ENCODE measurements at regions of chr21 and their contacts with region 1.

Region 1: DNA sequence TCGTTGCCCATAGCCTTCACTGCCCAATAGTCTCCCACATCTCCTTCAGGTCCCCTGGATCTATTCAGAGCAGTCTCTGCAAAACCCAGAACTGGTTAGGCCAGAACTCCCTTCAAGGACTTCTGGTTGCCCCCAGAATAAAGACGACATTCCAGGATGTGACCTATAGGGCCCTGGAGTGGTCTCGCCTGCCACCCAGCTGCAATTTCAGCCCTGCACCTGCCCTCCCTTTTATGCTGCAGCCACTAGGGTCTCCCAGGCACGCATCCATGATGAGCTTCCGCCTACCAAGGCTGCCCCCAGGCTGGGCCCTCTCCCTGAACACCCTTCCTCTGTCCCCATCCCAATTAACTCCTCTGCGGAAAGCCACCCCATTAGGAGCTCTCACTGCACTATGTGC is 7.2 kb upstream of the TSPEAR start:
- DNase-seq: no peak
- ATAC-seq: no peak
- H3K4me3 Mint-ChIP-seq: no peak overlapping the region
- H3K27ac Mint-ChIP-seq: no peak overlapping the region
- H3K4me1 Mint-ChIP-seq: peaks cover 10% of the 10 kb centered on the region
- H3K27me3 Mint-ChIP-seq: peaks cover 36% of the 10 kb centered on the region

Region 2: DNA sequence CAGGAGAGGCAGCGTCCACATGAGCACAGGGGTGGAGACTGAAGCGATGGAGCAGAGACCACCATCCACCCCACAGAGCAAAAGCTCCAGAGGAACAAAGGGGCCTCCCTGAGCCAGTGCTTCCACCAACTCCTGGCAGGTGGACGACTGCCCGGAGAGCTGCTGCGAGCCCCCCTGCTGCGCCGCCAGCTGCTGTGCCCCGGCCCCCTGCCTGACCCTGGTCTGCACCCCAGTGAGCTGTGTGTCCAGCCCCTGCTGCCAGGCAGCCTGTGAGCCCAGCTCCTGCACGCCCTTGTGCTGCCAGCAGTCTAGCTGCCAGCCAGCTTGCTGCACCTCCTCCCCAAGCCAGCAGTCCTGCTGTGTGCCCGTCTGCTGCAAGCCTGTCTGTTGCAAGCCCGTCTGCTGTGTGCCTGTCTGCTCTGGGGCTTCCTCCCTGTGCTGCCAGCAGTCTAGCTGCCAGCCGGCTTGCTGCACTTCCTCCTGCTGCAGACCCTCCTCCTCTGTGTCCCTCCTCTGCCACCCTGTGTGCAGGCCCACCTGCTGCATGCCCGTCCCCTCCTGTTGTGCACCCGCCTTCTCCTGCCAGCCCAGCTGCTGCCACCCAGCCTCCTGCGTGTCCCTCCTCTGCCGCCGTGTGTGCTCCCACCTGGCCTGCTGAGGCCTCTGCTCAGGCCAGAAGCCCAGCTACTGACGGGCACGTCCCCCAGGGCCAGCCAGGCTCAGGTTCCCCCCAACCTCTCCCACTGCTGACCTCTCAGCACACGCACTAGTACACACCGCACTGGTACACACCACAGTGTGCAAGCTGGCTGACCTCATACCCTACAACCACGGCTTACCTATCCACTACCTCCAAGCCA is 16.2 kb before region 1 on chr21:
- CTCF ChIA-PET with region 1: no interaction called
- POLR2A ChIA-PET with region 1: no interaction called
- intact Hi-C with region 1: no loop called
- DNase-seq: no peak
- ATAC-seq: no peak
- H3K4me3 Mint-ChIP-seq: no peak overlapping the region
- H3K27ac Mint-ChIP-seq: no peak overlapping the region
- H3K4me1 Mint-ChIP-seq: no peaks in the 10 kb centered on the region
- H3K27me3 Mint-ChIP-seq: peaks cover 68% of the 10 kb centered on the region

Region 3: DNA sequence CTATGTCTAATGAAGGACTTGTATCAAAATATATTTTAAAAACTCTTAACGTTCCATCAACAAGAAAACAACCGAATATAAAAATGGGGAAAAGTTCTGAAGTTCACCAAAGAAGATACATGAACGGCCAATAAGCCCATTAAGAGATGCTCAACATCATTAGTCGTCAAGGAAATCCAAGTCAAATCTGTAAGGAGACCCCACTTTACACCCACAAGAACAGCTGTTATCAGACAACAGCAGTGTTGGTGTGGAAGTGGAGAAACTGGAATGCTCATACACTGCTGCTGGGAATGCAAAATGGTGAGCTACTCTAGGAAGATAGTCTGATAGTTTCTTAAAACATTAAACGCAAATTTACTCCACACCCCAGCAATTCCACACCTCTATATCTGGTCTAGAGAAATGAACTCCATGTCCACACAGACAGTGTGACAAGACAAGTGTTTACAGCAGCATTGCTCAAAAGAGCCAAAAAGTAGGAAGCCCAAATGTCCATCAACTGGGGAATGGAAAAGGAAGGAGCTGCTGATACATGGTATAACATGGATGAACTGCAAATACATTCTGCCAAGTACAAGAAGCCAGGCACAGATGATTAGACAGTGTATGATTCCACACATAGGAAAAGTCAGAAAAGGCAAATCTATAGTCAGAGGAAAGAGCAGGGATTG is 64.6 kb after region 1 on chr21:
- CTCF ChIA-PET with region 1: no interaction called
- POLR2A ChIA-PET with region 1: no interaction called
- intact Hi-C with region 1: loop called in 1 of 2 experiments (anchors 2 kb)
- DNase-seq: no peak
- ATAC-seq: no peak
- H3K4me3 Mint-ChIP-seq: no peak overlapping the region
- H3K27ac Mint-ChIP-seq: no peak overlapping the region
- H3K4me1 Mint-ChIP-seq: peaks cover 23% of the 10 kb centered on the region
- H3K27me3 Mint-ChIP-seq: no peaks in the 10 kb centered on the region

Measured in activated CD4-positive, alpha-beta T cell treated with anti-CD3 and anti-CD28 coated beads for 36 hours (primary cell).